ENCODE measurements at regions of chr5 and their contacts with region 1.

Region 1: GRCh38 chr5:96408276-96408777 is 24.7 kb downstream of the PCSK1 start:
- DNase-seq: no peak

Region 2: GRCh38 chr5:96626956-96627355 is 218.6 kb after region 1 on chr5:
- CTCF ChIA-PET with region 1: interaction called, 13 read pairs
- POLR2A ChIA-PET with region 1: no interaction called
- DNase-seq: no peak

Measured in HEK293T (cell line).